ENCODE measurements at regions of chr1 and their contacts with region 1.

Region 1: GRCh38 chr1:152869808-152870419 is 8.2 kb upstream of the SMCP start:
- H3K4me3 ChIP-seq: no peak overlapping the region
- H3K27ac ChIP-seq: no peak overlapping the region
- H3K4me1 ChIP-seq: no peaks in the 10 kb centered on the region
- CTCF ChIP-seq: 0 out of 2 replicates have a peak, but pooled peaks have one; percentile 21

Region 2: DNA sequence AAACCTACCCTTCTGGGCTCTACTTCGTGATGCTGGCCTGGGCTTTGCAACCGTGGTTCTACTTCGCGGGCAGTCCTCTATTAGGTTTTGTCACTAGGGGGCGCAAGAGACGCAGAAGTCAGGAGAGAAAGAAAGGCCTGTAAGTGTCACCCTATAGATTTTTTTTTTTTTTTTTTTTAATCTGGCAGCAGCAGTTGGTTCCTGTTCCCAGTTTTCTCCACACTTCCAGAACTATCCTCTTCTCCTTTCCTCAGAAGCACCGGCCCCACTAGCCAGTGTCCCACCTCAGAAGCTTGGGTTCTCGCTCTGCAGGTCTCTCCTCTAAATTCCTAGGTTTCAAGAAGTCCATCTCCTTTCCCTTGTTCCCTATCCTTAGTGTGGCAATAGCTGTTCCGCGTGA is 215.8 kb before region 1 on chr1:
- CTCF ChIA-PET with region 1: interaction called, 24 read pairs
- POLR2A ChIA-PET with region 1: no interaction called
- H3K4me3 ChIP-seq: no peak overlapping the region
- H3K27ac ChIP-seq: no peak overlapping the region
- H3K4me1 ChIP-seq: no peaks in the 10 kb centered on the region
- CTCF ChIP-seq: 0 out of 2 replicates have a peak, but pooled peaks have one; percentile 35

Region 3: GRCh38 chr1:152855661-152856060 is 14.3 kb before region 1 on chr1:
- CTCF ChIA-PET with region 1: interaction called, 17 read pairs
- POLR2A ChIA-PET with region 1: no interaction called
- H3K4me3 ChIP-seq: no peak overlapping the region
- H3K27ac ChIP-seq: no peak overlapping the region
- H3K4me1 ChIP-seq: no peaks in the 10 kb centered on the region
- CTCF ChIP-seq: no peak

Region 4: DNA sequence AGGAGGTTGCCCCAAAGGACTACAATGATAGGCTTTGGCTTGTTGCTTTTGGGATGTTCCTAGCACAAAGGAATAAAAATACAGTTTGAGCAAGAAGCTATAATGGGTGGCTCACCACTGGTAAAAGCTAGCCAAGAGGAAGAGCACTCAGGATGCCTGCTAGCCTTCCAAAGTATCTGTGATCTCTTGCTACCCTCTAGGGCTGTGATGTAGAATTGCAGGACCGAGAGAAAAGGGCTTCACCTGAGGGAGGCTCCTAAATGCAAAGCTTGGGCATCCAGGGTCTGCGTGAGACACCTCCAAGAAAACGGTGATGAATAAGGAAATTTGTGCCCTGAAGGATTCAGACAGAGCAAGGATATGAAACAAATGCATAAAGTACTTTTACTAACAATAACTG is 56.2 kb after region 1 on chr1:
- CTCF ChIA-PET with region 1: interaction called, 15 read pairs
- POLR2A ChIA-PET with region 1: no interaction called
- H3K4me3 ChIP-seq: no peak overlapping the region
- H3K27ac ChIP-seq: no peak overlapping the region
- H3K4me1 ChIP-seq: no peaks in the 10 kb centered on the region
- CTCF ChIP-seq: no peak

Region 5: GRCh38 chr1:153192697-153193096 is 322.8 kb after region 1 on chr1:
- CTCF ChIA-PET with region 1: interaction called, 71 read pairs
- POLR2A ChIA-PET with region 1: no interaction called
- H3K4me3 ChIP-seq: no peak overlapping the region
- H3K27ac ChIP-seq: no peak overlapping the region
- H3K4me1 ChIP-seq: no peaks in the 10 kb centered on the region
- CTCF ChIP-seq: no peak

Region 6: DNA sequence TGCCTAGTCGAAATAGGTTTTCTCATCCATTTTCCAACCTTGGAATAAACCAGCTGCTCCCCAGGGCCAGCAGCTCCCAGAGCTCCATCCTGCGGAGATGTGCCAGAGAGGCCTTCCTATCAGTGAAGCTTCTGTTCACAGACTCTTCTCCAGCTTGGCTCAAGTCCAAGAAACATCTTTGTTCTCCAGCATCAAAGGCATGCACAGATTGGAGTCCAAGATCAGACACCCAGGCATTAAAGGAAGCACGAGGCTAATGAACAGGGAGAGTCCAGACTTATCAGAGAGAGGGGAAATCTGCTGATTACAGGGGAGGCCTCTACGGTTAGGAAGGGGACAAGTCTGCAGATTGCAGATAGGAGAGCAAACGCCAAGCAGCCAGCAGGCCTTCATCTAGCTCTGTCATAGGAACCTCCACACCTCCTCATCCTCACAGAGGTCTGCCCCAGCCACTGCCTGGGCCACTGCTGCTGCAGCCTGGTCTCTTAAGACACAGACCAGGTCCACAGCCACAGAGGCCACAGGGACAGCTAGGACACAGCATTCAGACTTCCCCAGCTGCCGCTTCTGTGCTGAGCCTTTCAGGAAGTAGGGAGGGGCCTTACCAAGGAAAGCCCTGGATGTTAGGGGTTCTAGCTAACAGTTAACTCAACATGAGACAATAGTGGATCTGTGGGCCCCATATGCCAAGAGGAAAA is 350.8 kb after region 1 on chr1:
- CTCF ChIA-PET with region 1: interaction called, 11 read pairs
- POLR2A ChIA-PET with region 1: no interaction called
- H3K4me3 ChIP-seq: no peak overlapping the region
- H3K27ac ChIP-seq: no peak overlapping the region
- H3K4me1 ChIP-seq: no peaks in the 10 kb centered on the region
- CTCF ChIP-seq: no peak

Region 7: DNA sequence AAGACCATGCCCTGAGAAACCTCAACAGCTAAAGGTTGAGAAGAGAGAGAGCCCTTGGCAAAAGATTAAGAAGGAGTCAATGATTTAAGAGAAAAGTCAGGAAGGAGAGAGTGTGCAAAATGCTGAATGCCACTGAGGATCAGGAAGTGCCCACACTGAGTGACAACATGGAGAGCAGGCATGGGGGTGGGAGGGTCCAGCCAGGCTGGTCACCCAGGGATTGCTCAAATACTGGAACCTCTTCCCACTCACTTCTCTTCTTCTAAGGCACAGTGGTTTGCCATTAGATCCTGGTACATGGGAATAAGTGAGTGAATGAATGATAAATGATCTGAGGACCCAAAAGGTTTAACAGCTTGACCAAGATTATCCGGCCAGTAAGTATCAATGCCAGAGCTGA is 358.6 kb after region 1 on chr1:
- CTCF ChIA-PET with region 1: interaction called, 24 read pairs
- POLR2A ChIA-PET with region 1: no interaction called
- H3K4me3 ChIP-seq: no peak overlapping the region
- H3K27ac ChIP-seq: no peak overlapping the region
- H3K4me1 ChIP-seq: no peaks in the 10 kb centered on the region
- CTCF ChIP-seq: no peak

Measured in HEK293 (cell line).